Heart left ventricle (tissue), 16 donors: ENCODE measurements at regions of chr5 and their contacts with region 1.

Region 1: GRCh38 chr5:180084688-180085561 is 13.4 kb upstream of the RNF130 start:
- DNase-seq: no peak
- ATAC-seq: peak in 1 of 4 donors; percentile 35
- H3K4me3 ChIP-seq: no peak overlapping the region
- H3K27ac ChIP-seq: no peak overlapping the region
- H3K4me1 ChIP-seq: peaks cover 0 to 10% (median 0%) of the 10 kb centered on the region in 12 donors
- H3K27me3 ChIP-seq: peaks cover 0 to 18% (median 0%) of the 10 kb centered on the region in 9 donors
- CTCF ChIP-seq: no peak
- POLR2A ChIP-seq: no peak

Region 2: GRCh38 chr5:179986328-179986727 is 98.6 kb before region 1 on chr5:
- intact Hi-C with region 1: loop called in 9 of 10 experiments (anchors 1 to 5 kb)
- DNase-seq: no peak
- ATAC-seq: peak; percentile 64 to 91 (median 76)
- H3K4me3 ChIP-seq: no peak overlapping the region
- H3K27ac ChIP-seq: no peak overlapping the region
- H3K4me1 ChIP-seq: no peaks in the 10 kb centered on the region
- H3K27me3 ChIP-seq: no peaks in the 10 kb centered on the region
- CTCF ChIP-seq: peak in 8 of 12 donors; percentile 6 to 49 (median 40)
- POLR2A ChIP-seq: no peak

Region 3: DNA sequence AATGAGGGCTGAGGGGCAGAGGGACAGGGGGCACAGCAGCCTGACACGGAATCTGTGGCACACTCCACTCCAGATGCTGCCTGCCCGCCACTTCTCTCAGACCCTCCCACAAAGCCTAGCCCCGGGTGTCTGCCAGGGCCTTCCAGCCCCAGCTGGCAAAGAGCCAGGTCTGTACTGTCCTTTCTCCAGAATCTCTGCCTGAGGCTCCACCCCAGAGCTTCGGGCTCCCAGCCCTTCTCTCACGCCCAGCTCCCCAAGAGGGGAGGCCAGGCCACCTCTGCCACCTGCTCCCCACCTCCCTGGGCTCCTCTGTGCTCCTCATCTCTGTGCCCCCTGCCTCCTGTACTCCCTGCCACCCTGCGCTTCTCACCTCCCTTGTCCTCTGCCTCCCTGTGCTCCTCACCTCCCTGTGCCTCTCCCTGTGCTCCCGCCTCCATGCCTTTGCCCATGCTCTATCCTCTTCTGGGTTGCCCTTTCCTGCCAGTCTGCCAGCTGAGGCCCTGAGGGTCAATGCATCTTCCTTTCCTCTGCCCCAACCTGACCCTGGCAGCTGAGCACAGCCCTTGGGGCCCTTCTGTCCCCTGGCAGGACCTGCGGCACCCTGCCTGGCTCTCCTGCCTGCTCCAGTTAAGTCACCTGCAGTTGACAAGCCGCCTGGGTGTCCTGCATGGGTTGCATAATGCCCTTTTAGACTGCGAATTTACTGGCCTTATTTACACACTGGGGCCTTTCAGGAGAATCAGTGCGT is 87.7 kb after region 1 on chr5:
- intact Hi-C with region 1: no loop called
- DNase-seq: peak in 3 of 5 donors; percentile 41 to 65 (median 62)
- ATAC-seq: peak; percentile 4 to 59 (median 23)
- H3K4me3 ChIP-seq: no peak overlapping the region
- H3K27ac ChIP-seq: peak overlapping the region in 2 of 12 donors; percentile 38 to 43
- H3K4me1 ChIP-seq: peaks cover 0 to 40% (median 6%) of the 10 kb centered on the region in 12 donors
- H3K27me3 ChIP-seq: peaks cover 0 to 4% (median 0%) of the 10 kb centered on the region in 9 donors
- CTCF ChIP-seq: no peak
- POLR2A ChIP-seq: no peak